Calu3 (cell line): ENCODE measurements at regions of chr22 and their contacts with region 1.

Region 1: DNA sequence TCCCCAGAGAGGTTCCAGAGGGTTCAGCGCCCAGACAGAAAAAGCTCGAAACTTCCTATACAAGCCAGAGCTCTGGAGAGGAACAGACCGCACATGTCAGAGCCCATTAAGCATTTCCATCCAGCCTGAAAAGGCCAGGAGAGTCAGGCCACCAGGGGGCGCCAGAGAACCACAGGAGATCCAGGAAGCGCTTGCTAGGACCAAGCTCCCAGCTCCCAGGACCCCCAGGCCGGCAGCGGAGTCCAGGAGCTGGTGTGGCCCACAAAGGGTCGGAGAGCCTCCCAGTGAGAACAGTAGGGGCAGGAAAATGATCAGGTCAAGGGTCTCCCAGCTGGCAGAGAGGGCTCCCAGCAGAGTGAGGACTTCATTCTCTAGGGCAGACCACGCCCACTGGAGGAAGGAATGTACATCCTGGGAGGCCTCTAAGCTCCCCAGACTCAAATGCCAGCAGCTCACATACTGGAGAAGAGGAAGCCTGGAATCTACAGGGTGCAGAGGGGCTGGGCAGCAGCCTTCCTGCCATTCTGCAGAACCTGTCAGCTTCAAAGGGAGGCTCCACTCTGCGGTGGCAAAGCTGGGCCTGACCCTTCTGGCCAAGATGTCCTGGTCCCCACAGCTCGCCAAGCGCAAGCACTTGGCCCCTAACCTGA is 2.1 kb upstream of the MEI1 start:
- DNase-seq: peak; percentile 95
- H3K4me3 Mint-ChIP-seq: peak overlapping the region; percentile 55
- H3K27ac Mint-ChIP-seq: peak overlapping the region; percentile 60
- H3K4me1 Mint-ChIP-seq: no peaks in the 10 kb centered on the region
- H3K27me3 Mint-ChIP-seq: no peaks in the 10 kb centered on the region
- CTCF ChIP-seq: peak; percentile 95

Region 2: GRCh38 chr22:41001722-41002122 is 695.5 kb before region 1 on chr22:
- CTCF ChIA-PET with region 1: no interaction called
- intact Hi-C with region 1: no loop called
- DNase-seq: peak; percentile 30
- H3K4me3 Mint-ChIP-seq: no peak overlapping the region
- H3K27ac Mint-ChIP-seq: peak overlapping the region; percentile 54
- H3K4me1 Mint-ChIP-seq: peaks cover 29% of the 10 kb centered on the region
- H3K27me3 Mint-ChIP-seq: no peaks in the 10 kb centered on the region
- CTCF ChIP-seq: no peak

Region 3: DNA sequence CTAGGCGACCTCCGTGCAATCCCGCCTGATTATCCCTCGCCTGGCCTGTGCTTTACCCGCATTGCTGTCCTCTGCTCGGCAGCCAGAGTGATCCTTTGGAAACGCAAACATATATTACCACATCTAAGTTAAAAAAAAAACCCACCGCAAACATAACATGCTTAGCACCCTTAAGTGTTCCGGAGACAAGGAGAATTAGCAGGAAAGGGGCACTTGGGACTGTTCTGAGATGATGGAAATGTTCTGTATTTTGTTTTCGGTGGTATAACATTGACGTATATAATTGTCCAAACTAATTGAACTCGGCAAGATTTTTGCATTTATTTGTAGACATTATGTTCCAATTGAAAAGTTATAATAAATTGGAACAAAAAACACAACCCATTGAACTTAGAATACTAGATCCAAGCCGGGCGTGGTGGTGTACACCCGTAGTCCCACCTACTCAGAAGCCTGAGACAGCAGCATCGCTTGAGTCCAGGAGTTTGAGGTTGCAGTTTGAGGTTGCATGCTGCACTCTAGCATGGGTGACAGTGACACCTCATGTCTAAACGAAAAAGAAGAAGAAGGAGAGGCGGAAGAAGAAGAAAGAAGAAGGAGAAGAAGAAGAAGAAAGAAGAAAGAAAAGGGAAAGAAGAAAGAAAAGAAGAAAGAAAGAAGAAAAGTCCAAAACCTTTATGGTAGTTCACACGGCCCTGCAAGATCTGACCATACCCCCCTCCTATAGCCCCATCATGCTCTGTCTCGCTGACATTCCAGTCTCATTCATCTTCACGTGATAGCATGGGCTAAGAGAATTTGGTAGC is 152.4 kb before region 1 on chr22:
- CTCF ChIA-PET with region 1: no interaction called
- intact Hi-C with region 1: no loop called
- DNase-seq: no peak
- H3K4me3 Mint-ChIP-seq: peak overlapping the region; percentile 99
- H3K27ac Mint-ChIP-seq: peak overlapping the region; percentile 89
- H3K4me1 Mint-ChIP-seq: peaks cover 35% of the 10 kb centered on the region
- H3K27me3 Mint-ChIP-seq: no peaks in the 10 kb centered on the region
- CTCF ChIP-seq: no peak

Region 4: DNA sequence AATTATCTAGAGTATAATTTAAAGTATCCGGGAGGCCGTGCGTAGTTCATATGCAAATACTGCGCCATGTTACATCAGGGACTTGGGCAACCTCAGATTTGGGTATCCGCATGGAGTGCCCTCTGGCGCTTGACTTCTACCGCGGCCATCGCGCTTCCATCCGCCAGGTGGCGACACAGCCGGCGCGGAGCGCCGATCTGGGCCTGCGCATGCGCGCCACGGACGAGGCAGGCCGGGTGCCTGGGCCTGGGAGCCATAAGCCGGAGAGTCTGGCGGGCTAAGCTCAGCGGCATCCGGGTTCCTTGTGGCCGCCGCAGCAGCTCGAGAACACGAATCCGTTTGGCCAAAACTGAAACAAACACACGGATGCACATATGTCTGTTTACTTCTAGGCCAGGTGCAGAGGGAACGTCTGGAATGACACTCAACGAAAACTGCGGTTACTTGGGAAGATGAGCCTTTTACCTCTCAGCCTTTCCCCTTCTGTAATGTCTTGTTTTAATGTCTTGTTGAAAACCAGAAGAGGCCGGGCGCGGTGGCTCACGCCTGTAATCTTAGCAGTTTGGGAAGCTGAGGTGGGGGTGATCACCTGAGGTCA is 30.5 kb before region 1 on chr22:
- CTCF ChIA-PET with region 1: interaction called, 17 read pairs
- intact Hi-C with region 1: no loop called
- DNase-seq: peak; percentile 93
- H3K4me3 Mint-ChIP-seq: peak overlapping the region; percentile 70
- H3K27ac Mint-ChIP-seq: peak overlapping the region; percentile 86
- H3K4me1 Mint-ChIP-seq: peaks cover 20% of the 10 kb centered on the region
- H3K27me3 Mint-ChIP-seq: no peaks in the 10 kb centered on the region
- CTCF ChIP-seq: peak; percentile 94

Region 5: DNA sequence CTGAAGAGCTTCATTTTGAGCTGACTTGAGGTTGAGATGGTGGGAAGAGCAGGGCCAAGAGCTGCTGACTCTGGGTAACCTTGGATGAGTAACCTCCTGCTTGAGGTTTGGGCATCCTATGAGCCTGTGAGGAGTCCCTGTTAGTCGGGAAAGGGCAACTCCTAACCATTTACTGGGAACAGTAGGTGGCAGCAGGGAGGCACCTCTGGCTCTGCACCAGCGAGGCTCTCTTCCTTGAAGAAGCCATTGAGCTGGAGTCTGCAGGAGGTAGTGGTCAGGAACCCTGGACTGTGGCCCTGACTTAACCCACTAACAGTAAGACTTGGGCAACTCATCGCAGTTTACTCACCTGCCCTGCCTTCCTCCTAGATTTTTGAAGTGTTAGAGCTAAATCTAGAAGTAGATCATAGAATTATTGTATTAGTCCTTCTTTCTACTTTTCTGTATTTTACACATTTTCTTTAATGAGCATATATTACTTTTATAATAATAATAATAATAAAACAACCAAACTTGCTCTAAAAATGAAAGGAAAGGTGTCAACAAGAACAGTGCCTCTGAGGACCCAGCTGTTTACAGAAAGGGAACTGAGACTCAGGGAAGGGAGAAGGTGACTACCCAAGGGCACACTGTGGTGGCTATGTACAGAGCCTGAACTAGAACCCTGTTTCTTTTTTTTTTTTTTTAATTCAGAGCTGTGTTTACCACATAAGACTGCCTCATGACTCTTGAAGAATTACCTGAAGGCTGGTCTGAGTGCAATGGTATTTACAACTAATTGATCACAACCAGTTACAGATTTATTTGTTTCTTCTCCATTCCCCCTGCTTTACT is 49.5 kb after region 1 on chr22:
- CTCF ChIA-PET with region 1: interaction called, 19 read pairs
- intact Hi-C with region 1: no loop called
- DNase-seq: peak; percentile 84
- H3K4me3 Mint-ChIP-seq: no peak overlapping the region
- H3K27ac Mint-ChIP-seq: no peak overlapping the region
- H3K4me1 Mint-ChIP-seq: no peaks in the 10 kb centered on the region
- H3K27me3 Mint-ChIP-seq: peaks cover 65% of the 10 kb centered on the region
- CTCF ChIP-seq: peak; percentile 59

Region 6: DNA sequence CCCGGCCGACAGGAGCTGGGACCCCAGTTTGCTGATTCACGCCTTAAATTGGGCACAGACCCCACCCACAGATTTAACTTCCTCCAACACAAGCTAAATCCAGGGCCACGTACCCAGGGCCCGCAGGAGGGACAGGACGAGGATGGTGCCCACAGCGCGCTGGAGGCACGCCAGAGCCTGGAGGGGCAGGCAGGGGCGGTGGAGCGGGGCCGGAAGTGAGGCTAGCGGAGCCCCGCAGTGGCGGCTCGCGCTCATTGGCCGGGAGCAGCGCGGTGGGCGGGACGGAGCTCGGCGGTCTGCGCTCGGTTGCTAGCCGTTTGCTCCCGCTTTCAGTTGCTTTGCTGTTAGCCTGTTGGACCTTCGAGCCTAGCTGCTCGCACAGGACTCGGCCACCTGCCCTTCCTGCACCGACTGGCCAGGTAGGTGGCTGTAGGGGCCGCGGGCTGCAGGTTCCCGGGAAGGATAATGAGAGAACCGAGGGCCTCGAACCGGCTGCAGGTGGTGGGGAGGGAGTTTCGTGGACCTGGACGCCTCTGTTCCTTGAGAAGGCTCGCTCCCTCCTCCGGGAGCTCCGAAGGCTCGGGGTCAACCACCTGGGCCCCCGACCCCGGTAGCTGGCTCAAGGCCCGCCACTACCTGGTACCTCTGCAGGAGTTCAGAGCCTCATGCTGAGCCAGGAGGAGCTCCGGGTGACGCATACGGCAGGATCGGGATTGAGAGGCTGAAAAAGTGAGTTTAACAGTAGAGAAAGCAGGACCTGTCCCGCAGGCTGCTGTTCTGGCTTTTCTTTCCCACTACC is 103.3 kb after region 1 on chr22 and contains the start of gene CCDC134:
- CTCF ChIA-PET with region 1: interaction called, 23 read pairs
- intact Hi-C with region 1: no loop called
- DNase-seq: peak; percentile 91
- H3K4me3 Mint-ChIP-seq: peak within 1 kb of the TSS; percentile 80
- H3K27ac Mint-ChIP-seq: peak within 1 kb of the TSS; percentile 37
- H3K4me1 Mint-ChIP-seq: peaks cover 11% of the 10 kb centered on the region
- H3K27me3 Mint-ChIP-seq: no peaks in the 10 kb centered on the region
- CTCF ChIP-seq: no peak
- total RNA-seq, gene CCDC134: 18.4 and 20.1 TPM in 2 replicates

Region 7: DNA sequence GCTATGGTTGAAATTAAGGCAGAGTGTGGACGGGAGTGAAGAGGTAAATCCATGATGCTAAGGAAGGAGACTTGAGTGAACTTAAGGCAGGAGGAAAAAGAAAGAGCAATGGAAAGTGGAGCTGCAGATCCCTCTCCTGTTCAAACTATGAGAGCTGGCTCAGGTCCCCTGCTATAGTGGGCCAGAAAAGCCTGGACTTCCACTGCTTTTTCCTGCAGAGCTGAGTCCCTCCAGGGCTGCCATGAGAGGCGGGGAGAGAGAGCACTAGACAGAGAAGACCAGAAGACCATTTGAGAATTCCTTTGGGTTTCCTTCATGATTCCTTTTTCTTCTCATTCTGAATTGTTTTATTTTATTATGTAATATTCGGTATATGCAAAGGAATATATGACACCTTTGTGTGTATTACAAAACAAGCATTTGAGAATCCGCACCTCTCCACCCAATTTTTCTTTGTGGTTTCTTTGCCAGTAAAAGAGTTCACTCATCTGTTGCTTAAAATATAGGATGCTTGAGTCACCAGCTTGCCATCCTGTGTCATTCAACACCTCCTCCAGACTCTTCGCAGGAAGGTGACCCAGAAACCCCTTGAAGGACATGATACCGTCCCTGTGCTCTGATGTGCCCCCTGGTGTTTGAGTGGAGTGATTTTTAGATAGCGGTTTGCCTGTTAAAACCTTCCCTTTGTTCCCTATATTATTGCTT is 160.1 kb after region 1 on chr22:
- CTCF ChIA-PET with region 1: interaction called, 15 read pairs
- intact Hi-C with region 1: no loop called
- DNase-seq: peak; percentile 72
- H3K4me3 Mint-ChIP-seq: no peak overlapping the region
- H3K27ac Mint-ChIP-seq: peak overlapping the region; percentile 63
- H3K4me1 Mint-ChIP-seq: peaks cover 35% of the 10 kb centered on the region
- H3K27me3 Mint-ChIP-seq: no peaks in the 10 kb centered on the region
- CTCF ChIP-seq: peak; percentile 68

Region 8: DNA sequence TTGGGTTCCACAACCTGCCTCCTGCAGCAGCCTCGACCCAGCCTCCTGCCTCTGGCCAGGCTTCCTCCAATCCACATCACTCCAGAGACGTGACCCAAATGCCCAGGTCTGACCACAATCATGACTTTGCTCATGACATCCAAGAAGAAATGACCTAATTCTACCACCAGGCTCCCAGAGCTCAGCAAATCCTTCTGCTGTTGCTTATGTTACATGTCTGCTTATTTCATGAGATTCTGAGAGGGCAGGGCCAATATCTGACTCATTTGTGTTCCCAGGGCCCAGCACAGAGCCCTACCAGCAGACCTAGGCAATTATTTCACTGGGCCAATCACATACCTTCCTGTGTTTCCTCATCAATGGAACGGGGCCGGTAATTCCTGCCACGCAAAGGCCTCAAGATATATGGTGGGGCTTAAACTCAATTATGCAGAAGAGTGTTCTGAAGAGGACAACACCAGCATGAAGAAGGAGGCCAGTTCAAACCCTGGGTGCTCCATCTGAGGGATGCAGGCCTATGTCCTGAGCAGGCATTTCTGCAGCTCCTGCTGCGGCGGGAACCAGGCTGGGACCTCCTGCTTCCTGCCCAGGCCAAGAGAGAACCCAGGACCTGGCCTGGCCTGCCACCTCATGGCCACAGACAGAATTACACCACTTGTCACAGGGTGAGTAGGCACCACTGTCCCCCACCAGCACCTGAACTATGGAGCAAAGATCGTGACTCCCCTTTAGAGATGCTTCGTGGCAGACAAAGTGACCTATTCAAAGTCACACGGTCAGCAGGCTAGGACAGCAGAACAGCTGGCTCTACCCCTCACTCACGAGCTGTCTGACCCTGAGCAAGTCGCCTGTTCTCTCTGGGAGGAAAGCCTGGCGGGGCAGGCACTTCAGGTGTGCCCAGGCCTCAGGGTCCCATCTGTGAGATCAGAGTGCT is 243.8 kb after region 1 on chr22:
- CTCF ChIA-PET with region 1: interaction called, 25 read pairs
- intact Hi-C with region 1: loop called (anchors 1 kb)
- DNase-seq: peak; percentile 88
- H3K4me3 Mint-ChIP-seq: peak overlapping the region; percentile 4
- H3K27ac Mint-ChIP-seq: peak overlapping the region; percentile 96
- H3K4me1 Mint-ChIP-seq: peaks cover 57% of the 10 kb centered on the region
- H3K27me3 Mint-ChIP-seq: no peaks in the 10 kb centered on the region
- CTCF ChIP-seq: peak; percentile 78